PC-9 (cell line): ENCODE measurements at regions of chr11 and their contacts with region 1.

Region 1: DNA sequence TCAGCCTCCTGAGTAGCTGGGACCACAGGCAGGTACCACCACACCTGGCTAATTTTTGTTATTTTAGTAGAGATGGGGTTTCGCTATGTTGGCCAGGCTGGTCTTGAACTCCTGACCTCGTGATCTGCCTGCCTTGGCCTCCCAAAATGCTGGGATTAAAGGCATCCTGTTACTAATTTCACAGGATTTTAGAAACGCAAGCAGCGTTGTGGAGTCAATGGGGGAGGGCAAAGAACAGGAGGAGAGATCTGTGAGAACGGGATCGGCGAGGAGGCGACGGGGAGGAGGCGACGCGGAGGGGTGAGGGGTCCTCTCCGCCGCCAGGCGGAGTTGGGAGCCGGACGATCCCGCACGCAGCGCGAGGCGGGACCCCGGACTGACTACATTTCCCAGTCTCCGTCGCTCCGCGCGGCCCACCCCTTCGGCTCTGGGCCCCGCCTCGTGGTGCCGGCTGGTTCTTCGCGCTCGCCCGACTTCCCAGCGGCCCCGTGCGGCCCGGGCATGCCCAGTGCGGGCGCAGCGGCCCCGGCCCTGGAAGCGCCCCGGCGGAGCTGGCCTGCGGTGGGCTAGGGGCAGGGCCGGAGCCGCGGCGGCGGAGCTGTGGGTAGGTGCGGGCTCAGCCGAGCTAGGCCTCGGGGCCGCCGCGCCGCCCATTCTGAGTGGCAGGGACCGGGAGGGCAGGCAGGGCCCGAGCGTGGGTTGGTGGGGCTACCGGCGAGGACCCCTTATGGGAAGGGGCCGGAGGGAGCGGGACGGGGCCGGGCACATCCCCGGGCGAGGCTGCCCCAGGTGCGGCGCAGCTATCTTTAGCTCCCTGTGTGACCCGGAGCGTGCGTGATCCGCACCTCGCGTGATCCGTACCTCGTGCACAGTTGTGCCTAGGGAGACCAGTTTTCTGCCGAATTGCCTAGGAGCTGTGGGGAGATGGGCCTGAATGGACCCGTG is at the start of gene EI24:
- DNase-seq: peak; percentile 76 to 90
- H3K4me3 ChIP-seq: peak within 1 kb of the TSS; percentile 98
- H3K27ac ChIP-seq: peak within 1 kb of the TSS; percentile 41; the same call in 1 of the 2 replicates
- H3K4me1 ChIP-seq: peaks cover 11% of the 10 kb centered on the region; the same call in 1 of the 2 replicates
- H3K27me3 ChIP-seq: no peaks in the 10 kb centered on the region
- CTCF ChIP-seq: peak; percentile 66
- total RNA-seq, gene EI24: 69.7 and 88.2 TPM in 2 replicates

Region 2: GRCh38 chr11:124882339-124883071 is 686.7 kb before region 1 on chr11:
- CTCF ChIA-PET with region 1: no interaction called
- POLR2A ChIA-PET with region 1: no interaction called
- intact Hi-C with region 1: loop called (anchors 10 kb)
- DNase-seq: no peak
- H3K4me3 ChIP-seq: no peak overlapping the region
- H3K27ac ChIP-seq: no peak overlapping the region
- H3K4me1 ChIP-seq: no peaks in the 10 kb centered on the region
- H3K27me3 ChIP-seq: peaks cover 53% of the 10 kb centered on the region
- CTCF ChIP-seq: no peak

Region 3: DNA sequence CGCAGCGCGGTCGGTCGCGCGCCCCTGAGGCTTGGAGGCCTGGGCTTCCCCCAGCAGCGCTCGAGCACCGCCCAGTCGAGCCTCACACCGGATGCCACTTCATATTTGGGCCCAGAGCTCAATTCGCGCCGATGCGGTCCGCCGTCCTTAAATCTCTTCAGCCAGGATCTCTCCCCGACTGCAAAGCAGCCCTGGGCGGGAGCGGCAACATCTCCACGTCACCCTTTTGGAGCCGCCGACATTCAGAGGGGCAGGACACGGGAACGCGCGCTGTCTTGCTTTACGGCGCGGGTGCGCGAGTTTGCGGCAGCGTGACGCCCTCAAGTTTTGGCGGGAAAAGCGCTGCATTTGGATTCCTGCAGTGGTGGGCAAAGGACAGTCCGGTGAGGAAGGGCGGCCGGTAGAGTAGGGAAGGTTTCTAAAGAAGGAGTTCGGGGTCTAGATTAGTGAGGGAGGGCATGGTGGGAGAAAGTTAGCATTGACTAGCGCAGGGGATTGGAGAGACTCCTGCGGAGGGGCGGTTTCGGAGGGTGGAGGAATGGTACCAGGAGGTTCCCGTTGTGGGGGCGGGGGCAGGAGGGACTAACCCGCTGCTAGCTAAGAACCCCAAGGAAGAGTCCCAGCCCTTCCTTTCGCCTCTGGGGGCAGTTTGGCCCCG is 56.5 kb after region 1 on chr11:
- CTCF ChIA-PET with region 1: no interaction called
- POLR2A ChIA-PET with region 1: no interaction called
- intact Hi-C with region 1: loop called (anchors 1 kb)
- DNase-seq: peak; percentile 82 to 88
- H3K4me3 ChIP-seq: peak overlapping the region; percentile 71
- H3K27ac ChIP-seq: peak overlapping the region; percentile 77
- H3K4me1 ChIP-seq: peaks cover 15% of the 10 kb centered on the region
- H3K27me3 ChIP-seq: no peaks in the 10 kb centered on the region
- CTCF ChIP-seq: no peak

Region 4: GRCh38 chr11:125689282-125689859 is 120.1 kb after region 1 on chr11:
- CTCF ChIA-PET with region 1: no interaction called
- POLR2A ChIA-PET with region 1: no interaction called
- intact Hi-C with region 1: no loop called
- DNase-seq: no peak
- H3K4me3 ChIP-seq: no peak overlapping the region
- H3K27ac ChIP-seq: no peak overlapping the region
- H3K4me1 ChIP-seq: no peaks in the 10 kb centered on the region
- H3K27me3 ChIP-seq: peaks cover 26% of the 10 kb centered on the region
- CTCF ChIP-seq: no peak

Region 5: GRCh38 chr11:125787827-125788226 is 218.6 kb after region 1 on chr11 and contains the start of gene PATE3:
- CTCF ChIA-PET with region 1: no interaction called
- POLR2A ChIA-PET with region 1: interaction called, 27 read pairs
- intact Hi-C with region 1: no loop called
- DNase-seq: no peak
- H3K4me3 ChIP-seq: no peak within 1 kb of the TSS
- H3K27ac ChIP-seq: no peak within 1 kb of the TSS
- H3K4me1 ChIP-seq: no peaks in the 10 kb centered on the region
- H3K27me3 ChIP-seq: no peaks in the 10 kb centered on the region
- CTCF ChIP-seq: no peak
- total RNA-seq, gene PATE3: not detected in 2 replicates